Activated naive CD4-positive, alpha-beta T cell treated with anti-CD3 and anti-CD28 coated beads, Interleukin-2, amount 10 ng/mL, durations not matched to agents 7 days and 5 days (primary cell): ENCODE measurements at regions of chr4 and their contacts with region 1.

Region 1: DNA sequence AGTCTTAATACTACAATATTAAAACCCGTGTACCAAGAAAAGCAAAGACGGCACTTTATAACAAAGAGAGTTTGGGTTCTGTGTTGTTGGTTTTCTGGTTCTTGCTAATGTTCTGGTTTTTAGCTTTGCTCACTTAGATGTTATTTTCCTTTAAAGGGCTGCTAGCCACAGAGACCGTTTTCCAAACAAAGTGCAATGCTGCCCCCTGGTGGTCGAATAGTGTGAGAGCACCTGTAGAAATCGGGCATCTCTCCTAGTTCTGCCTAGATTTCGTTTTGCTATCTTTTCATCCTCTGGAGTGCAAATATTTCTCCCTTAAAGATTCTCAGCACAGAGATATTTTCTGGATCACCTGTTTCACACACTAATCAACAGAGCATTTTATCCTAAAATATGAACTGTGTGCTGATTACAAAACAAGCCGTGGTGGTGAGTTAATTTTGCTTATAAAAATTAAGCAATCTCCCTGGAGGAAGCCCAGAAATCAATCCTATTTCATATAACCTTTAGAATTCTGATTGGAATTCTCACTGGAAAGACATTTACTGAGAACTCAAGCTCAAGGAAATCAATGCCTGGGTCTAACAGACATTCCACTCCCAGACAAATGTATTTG is 334.5 kb upstream of the NOCT start:
- DNase-seq: peak; percentile 80
- H3K4me3 Mint-ChIP-seq: no peak overlapping the region
- H3K27ac Mint-ChIP-seq: no peak overlapping the region
- H3K4me1 Mint-ChIP-seq: no peaks in the 10 kb centered on the region
- H3K27me3 Mint-ChIP-seq: peaks cover 10% of the 10 kb centered on the region

Region 2: DNA sequence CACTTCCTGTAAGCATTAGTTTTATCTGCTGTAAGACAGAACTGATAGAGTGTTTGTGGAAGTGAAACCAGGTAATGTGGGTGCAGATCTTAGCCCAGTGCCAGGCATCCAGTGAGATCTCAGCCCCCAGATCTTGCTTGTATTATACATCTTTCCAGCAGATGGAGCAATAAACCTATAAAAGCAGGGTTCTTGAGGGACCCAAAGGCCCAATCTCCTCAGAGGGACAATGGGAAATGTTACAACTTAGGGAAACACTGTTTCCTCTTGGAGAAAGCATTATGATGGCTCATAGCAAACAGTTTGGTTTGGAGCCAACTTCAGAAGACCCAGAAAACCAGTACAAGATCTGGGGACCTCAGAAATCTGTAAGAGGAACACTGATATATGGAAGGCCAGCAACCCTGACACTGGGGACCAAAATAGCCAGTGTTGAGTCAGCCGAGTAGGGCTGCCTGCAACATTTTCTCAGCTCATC is 645.3 kb before region 1 on chr4:
- CTCF ChIA-PET with region 1: interaction called, 12 read pairs
- DNase-seq: no peak
- H3K4me3 Mint-ChIP-seq: no peak overlapping the region
- H3K27ac Mint-ChIP-seq: no peak overlapping the region
- H3K4me1 Mint-ChIP-seq: no peaks in the 10 kb centered on the region
- H3K27me3 Mint-ChIP-seq: no peaks in the 10 kb centered on the region

Region 3: DNA sequence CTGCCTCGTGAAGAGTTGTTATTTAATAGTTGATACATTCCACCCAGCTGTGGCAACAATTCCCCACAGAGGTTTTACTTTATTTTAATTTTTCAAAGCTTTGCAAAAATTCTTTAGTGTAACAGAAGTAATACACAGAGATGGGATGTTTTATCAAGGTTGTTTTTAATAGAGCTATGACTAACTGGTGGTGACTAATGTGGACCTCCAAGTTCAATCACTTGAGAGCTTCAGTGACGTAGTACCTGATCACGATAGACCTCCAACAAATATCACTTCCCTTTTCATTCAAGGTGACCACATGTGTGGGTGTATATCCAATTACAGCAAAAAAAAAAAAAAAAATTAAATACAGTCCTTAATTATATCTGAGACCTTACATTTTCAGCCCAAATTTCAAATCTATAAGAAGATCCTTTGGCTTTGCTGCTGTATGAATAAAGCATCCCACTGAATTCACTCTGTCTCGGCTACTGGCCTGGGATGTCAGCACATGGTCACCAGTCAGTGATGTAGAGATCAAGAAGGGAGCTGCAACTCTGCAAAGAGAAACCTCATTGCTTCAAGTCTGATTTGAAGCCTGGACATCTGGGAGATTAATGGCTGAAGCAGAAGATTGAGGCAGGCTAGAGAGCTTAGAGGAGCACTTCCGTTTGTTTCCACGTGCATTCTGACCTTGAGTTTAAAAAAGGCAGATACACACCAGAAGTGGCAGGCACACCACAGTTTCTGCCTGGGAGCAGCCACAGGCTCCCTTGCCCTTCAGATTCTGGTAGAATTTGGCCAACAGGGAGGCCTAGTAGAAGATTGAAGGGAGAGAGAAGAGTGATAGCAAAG is 11.4 kb before region 1 on chr4:
- CTCF ChIA-PET with region 1: interaction called, 10 read pairs
- DNase-seq: no peak
- H3K4me3 Mint-ChIP-seq: no peak overlapping the region
- H3K27ac Mint-ChIP-seq: no peak overlapping the region
- H3K4me1 Mint-ChIP-seq: no peaks in the 10 kb centered on the region
- H3K27me3 Mint-ChIP-seq: peaks cover 3% of the 10 kb centered on the region

Region 4: DNA sequence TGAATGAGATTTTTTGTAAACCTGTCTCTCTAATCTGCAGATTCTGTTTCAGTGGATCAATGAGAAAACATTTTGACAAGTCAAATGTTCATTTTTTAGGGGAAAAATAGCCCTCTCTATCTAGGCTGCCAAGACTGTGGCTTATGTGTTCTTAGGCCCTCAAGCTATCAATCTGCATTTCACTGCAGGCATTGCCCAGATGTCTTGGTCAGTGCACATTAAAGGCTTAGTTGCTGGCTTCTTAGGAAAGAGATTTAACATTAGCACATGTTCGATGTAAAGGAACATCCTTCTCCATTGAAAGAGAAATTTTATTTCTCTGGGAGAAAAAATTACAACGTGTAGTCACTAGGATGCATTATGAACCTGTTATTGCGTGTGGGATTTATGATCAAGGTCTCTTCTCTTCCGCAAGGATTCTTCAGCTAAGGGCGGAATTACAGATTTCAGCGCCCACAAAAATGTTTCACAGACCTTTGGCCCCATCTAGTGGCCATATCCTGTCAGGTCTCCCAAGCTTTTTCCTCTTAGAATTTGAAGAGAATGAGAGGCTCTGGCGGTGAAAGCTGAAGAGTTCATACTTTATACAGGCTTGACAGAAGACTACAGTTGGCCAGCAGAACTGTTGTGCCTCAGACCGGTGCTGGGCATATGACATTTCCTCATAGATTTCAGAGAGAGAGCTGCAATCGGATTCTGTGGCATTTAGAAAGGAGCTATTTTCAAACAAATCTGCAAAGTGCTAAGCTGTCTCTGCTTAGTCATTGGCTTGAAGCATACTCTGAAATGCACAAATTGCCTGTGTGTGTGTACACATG is 189.8 kb after region 1 on chr4:
- CTCF ChIA-PET with region 1: interaction called, 11 read pairs
- DNase-seq: peak; percentile 64
- H3K4me3 Mint-ChIP-seq: no peak overlapping the region
- H3K27ac Mint-ChIP-seq: no peak overlapping the region
- H3K4me1 Mint-ChIP-seq: no peaks in the 10 kb centered on the region
- H3K27me3 Mint-ChIP-seq: peaks cover 20% of the 10 kb centered on the region